ENCODE measurements at regions of chr12 and their contacts with region 1.

Region 1: DNA sequence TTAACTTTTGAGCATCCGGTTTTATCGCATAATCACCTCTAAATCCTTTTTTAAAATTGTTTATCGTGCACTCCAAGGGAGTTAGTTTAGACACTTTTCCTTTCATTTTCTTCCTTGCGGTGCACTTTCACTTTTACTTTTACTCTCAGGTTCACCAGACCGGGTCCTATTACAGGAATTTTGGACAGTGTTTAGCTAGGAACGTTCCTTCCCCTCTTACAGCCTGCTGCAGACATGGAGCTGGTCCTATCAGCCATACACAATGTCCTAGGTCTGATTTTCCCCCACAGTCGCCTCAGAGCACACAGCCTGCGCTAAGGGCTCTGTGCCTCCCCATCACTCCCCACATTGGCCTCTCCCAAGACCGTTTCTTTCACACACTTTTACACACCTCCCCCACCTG is 103.9 kb downstream of the ALG10 start:
- DNase-seq: no peak
- ATAC-seq: peak; percentile 85 to 92 (median 87)
- H3K4me3 ChIP-seq: peak overlapping the region; percentile 23 to 55 (median 48)
- H3K27ac ChIP-seq: peak overlapping the region in 2 of 3 donors; percentile 22 to 42
- H3K4me1 ChIP-seq: peaks cover 0 to 3% (median 0%) of the 10 kb centered on the region in 4 donors
- H3K27me3 ChIP-seq: no peaks in the 10 kb centered on the region
- CTCF ChIP-seq: no peak
- POLR2A ChIP-seq: no peak

Region 2: GRCh38 chr12:33839220-33839619 is 287.0 kb before region 1 on chr12:
- intact Hi-C with region 1: no loop called
- DNase-seq: no peak
- ATAC-seq: no peak
- H3K4me3 ChIP-seq: no peak overlapping the region
- H3K27ac ChIP-seq: no peak overlapping the region
- H3K4me1 ChIP-seq: no peaks in the 10 kb centered on the region
- H3K27me3 ChIP-seq: no peaks in the 10 kb centered on the region
- CTCF ChIP-seq: no peak
- POLR2A ChIP-seq: no peak

Region 3: GRCh38 chr12:34163431-34163830 is 37.2 kb after region 1 on chr12:
- intact Hi-C with region 1: no loop called
- DNase-seq: no peak
- ATAC-seq: no peak
- H3K4me3 ChIP-seq: no peak overlapping the region
- H3K27ac ChIP-seq: no peak overlapping the region
- H3K4me1 ChIP-seq: no peaks in the 10 kb centered on the region
- H3K27me3 ChIP-seq: no peaks in the 10 kb centered on the region
- CTCF ChIP-seq: no peak
- POLR2A ChIP-seq: no peak

Region 4: DNA sequence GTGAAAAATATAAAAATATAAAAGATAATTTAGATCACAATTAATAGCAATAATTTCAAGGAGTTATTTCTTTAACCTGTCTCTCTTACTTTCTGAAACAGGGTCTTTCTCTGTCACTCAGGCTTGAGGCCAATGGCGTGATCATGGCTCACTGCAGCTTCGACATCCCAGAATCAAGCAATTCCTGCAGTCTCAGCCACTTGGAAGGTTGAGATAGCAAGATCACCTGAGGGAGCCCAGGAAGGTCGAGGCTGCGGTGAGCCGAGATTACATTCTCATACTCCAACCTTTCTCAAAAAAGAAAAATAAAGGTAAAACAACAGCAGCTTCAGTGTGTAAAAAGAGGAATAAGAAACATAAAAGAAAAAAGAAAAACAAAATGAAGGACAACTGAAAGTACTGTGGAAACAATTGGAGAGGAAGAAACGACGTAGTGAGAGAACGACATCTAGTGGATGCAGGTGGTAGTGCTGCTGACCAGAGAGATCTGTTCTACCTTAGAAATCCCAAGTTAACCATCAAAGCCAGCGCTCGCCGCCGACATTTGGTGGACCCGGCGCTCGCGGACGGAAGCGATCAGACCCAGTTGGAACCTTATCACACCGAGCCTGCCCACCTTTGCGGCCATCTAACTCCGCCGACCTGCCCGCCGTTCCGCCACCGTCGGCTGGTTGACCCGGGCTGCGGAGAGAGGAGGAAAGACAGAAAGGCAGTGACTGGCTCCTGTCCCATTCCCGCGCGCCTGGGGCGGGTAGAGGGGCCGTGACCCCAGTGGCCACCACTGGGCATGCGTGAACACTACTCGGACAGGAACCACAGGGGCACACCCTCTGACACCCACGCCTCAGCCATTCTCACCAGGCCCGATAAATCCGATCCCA is 92.2 kb after region 1 on chr12:
- intact Hi-C with region 1: loop called in 1 of 2 experiments (anchors 5 kb)
- DNase-seq: peak; percentile 66 to 80 (median 73)
- ATAC-seq: peak; percentile 96 to 98 (median 98)
- H3K4me3 ChIP-seq: peak overlapping the region; percentile 36 to 63 (median 52)
- H3K27ac ChIP-seq: no peak overlapping the region
- H3K4me1 ChIP-seq: peaks cover 0 to 3% (median 0%) of the 10 kb centered on the region in 4 donors
- H3K27me3 ChIP-seq: no peaks in the 10 kb centered on the region
- CTCF ChIP-seq: peak; percentile 90 to 98 (median 95)
- POLR2A ChIP-seq: no peak

Region 5: GRCh38 chr12:34625116-34625515 is 498.9 kb after region 1 on chr12:
- intact Hi-C with region 1: loop called in 1 of 2 experiments (anchors 10 kb)
- DNase-seq: no peak
- ATAC-seq: peak in 1 of 4 donors; percentile 64
- H3K4me3 ChIP-seq: no peak overlapping the region
- H3K27ac ChIP-seq: no peak overlapping the region
- H3K4me1 ChIP-seq: peaks cover 0 to 7% (median 3%) of the 10 kb centered on the region in 4 donors
- H3K27me3 ChIP-seq: no peaks in the 10 kb centered on the region
- CTCF ChIP-seq: peak; percentile 29 to 49 (median 43)
- POLR2A ChIP-seq: no peak

Measured in right lobe of liver (tissue), 6 donors.